WTC11 (cell line): ENCODE measurements at regions of chr6 and their contacts with region 1.

Region 1: DNA sequence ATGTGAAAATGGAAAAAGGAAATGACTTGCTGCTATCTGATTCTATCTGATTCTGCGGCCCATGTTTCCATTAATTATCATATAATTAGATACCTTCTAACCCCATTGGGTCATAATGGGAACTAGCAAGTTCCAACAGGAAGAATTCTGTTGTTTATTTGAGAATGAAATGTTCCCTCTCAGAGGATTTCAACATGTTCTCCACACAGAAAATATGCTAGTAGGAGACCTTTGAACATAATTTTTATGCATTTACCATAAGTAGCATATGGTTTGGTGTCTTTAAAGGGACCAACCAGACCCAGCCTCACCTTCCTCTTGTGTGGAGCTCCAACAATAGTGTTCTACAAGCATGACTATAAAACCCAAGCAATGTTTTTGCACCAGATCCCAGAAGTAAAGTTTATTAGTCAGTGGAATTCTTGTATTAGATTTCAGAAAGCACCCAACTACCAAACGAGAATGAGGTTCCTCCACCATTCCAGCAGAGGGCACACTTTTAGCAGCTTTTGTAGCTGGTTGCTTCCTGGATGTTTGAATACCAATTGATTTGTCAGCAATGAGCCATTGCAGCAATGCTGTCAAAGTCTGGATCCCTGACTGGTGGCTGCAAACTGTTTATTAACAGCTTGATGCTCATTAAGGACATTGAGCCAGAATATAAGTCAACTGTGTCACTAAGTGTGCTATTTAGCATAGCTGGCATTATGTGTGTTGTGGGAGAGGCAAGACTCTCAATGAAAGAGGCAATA is 143.6 kb upstream of the GJE1 start:
- DNase-seq: peak; percentile 45
- ATAC-seq: peak; percentile 85
- H3K4me3 Mint-ChIP-seq: no peak overlapping the region
- H3K27ac Mint-ChIP-seq: no peak overlapping the region; the same call in 1 of the 2 replicates
- H3K4me1 Mint-ChIP-seq: peaks cover 37% of the 10 kb centered on the region
- H3K27me3 Mint-ChIP-seq: no peaks in the 10 kb centered on the region
- CTCF ChIP-seq: peak; percentile 79

Region 2: GRCh38 chr6:141667580-141668309 is 321.4 kb before region 1 on chr6:
- CTCF ChIA-PET with region 1: no interaction called
- POLR2A ChIA-PET with region 1: no interaction called
- DNase-seq: no peak
- ATAC-seq: no peak
- H3K4me3 Mint-ChIP-seq: no peak overlapping the region
- H3K27ac Mint-ChIP-seq: no peak overlapping the region
- H3K4me1 Mint-ChIP-seq: no peaks in the 10 kb centered on the region
- H3K27me3 Mint-ChIP-seq: no peaks in the 10 kb centered on the region
- CTCF ChIP-seq: no peak

Region 3: GRCh38 chr6:142088858-142089216 is 99.7 kb after region 1 on chr6:
- CTCF ChIA-PET with region 1: interaction called, 10 read pairs
- POLR2A ChIA-PET with region 1: no interaction called
- DNase-seq: peak; percentile 84
- ATAC-seq: peak; percentile 96
- H3K4me3 Mint-ChIP-seq: peak overlapping the region; percentile 79
- H3K27ac Mint-ChIP-seq: no peak overlapping the region
- H3K4me1 Mint-ChIP-seq: peaks cover 7% of the 10 kb centered on the region
- H3K27me3 Mint-ChIP-seq: peaks cover 25% of the 10 kb centered on the region
- CTCF ChIP-seq: no peak

Region 4: GRCh38 chr6:142112451-142113061 is 123.4 kb after region 1 on chr6:
- CTCF ChIA-PET with region 1: interaction called, 14 read pairs
- POLR2A ChIA-PET with region 1: no interaction called
- DNase-seq: peak; percentile 81
- ATAC-seq: peak; percentile 56; the same call in 1 of the 2 replicates
- H3K4me3 Mint-ChIP-seq: no peak overlapping the region
- H3K27ac Mint-ChIP-seq: no peak overlapping the region
- H3K4me1 Mint-ChIP-seq: 0 out of 2 replicates have a peak, but pooled peaks cover 5% of the 10 kb centered on the region
- H3K27me3 Mint-ChIP-seq: no peaks in the 10 kb centered on the region
- CTCF ChIP-seq: peak; percentile 75

Region 5: GRCh38 chr6:143232849-143233248 is 1243.7 kb after region 1 on chr6:
- CTCF ChIA-PET with region 1: no interaction called
- POLR2A ChIA-PET with region 1: no interaction called
- DNase-seq: peak; percentile 74
- ATAC-seq: peak; percentile 75
- H3K4me3 Mint-ChIP-seq: no peak overlapping the region
- H3K27ac Mint-ChIP-seq: no peak overlapping the region
- H3K4me1 Mint-ChIP-seq: peaks cover 23% of the 10 kb centered on the region
- H3K27me3 Mint-ChIP-seq: no peaks in the 10 kb centered on the region
- CTCF ChIP-seq: peak; percentile 54; the same call in 1 of the 2 replicates